ACHN (cell line): ENCODE measurements at regions of chr13 and their contacts with region 1.

Region 1: DNA sequence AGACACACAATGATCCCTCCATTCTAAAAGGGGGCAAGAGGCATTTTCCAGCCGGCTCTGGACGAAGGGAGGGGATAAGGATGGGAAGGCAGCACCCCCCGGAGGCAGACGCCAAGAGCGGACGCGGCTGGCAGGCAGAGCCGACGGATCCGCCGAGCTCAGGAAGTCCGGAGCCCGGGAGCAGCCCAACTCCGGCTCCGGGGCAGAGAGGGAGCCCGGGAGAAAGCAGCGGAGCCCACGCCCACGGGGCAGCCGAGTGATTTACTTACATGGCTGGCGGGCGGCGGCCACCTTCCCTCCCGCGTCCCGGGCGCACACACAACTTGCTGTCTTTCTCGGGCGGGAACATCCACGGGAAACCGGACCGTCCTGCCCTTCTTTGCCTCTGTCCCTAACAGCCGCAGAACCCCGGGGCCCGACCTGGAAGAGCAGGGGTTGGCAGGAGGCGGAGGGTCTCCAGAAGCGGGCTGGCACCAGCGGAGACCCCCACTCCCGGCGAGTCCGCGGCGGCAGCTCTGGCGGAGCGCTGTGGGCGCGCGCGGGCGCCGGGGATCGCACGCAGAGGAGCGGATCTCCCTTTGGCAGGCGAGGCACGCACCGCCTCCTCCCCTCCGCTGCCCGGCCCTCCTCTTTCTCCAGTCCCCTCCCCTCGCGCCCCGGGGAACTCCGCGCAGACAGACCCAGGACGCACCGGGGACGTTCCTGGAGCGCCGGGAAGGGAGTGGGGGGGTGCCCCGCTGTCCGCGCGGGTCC is at the start of gene LHFPL6:
- DNase-seq: peak; percentile 75

Region 2: DNA sequence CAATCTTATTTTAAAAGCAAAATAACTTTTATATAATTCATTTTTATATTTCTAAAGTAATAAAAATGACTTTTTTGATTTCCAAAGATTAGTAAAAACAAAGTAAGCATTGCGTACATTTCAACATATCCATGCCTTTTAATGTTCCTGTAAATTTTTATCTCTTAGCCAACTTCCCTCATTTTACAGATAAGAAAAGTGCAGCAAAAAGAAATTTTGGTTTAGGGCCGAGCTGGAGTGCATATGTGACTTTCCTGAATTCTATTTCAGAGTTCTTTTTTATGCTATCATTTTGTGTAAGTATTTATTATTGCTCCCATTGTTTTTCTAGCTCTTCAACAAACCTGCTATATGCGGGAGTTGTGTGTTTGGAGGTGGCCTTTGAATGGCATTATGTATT is 369.3 kb before region 1 on chr13:
- in situ Hi-C with region 1: no loop called
- DNase-seq: no peak

Region 3: DNA sequence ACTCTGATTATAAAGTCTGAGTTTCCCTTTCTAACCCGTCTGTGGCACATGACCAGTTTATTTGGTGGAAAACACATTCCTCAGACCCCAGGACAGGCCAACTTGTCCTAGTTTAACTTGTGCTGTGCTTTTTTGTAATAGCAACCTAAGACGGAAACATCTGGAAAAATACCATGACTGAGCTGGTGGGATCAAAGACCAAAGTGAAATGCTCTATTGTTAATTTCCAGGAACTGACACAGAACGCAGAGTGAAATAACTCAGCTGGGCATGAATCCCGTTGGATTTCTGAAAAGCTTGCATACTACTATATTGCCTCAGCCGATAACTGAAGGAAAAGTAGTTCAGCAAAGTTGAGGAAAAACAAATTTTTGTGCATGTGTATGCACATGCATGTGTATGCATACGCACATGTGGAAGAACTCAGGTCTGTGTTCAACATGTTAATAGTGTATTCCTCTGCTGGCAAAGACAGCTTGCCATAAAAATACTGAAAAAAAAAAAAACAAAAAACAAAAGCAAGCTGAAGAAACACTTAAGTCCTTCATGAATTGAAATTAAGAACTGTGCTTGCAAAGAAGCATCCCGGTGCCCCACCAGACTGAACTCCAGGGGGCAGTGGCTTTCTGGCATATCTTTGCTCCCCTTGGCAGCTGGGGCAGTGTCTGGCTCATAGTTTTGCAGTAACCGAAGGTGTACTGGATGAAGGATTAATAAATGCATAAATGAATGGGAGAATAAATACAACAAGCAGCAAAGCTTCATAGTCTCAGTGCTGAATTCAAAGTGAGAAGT is 187.6 kb before region 1 on chr13:
- in situ Hi-C with region 1: loop called (anchors 25 kb)
- DNase-seq: peak; percentile 57